Left colon (tissue), 2 donors: ENCODE measurements at regions of chr9 and their contacts with region 1.

Region 1: GRCh38 chr9:135080286-135081263 is 6.9 kb upstream of the OLFM1 start:
- DNase-seq: peak; percentile 0 to 7
- ATAC-seq: no peak

Region 2: GRCh38 chr9:135410831-135411473 is 330.4 kb after region 1 on chr9:
- intact Hi-C with region 1: loop called (anchors 5 kb)
- DNase-seq: peak in 1 of 2 donors; percentile 12
- ATAC-seq: no peak